Endothelial cell of umbilical vein (primary cell): ENCODE measurements at regions of chr10 and their contacts with region 1.

Region 1: DNA sequence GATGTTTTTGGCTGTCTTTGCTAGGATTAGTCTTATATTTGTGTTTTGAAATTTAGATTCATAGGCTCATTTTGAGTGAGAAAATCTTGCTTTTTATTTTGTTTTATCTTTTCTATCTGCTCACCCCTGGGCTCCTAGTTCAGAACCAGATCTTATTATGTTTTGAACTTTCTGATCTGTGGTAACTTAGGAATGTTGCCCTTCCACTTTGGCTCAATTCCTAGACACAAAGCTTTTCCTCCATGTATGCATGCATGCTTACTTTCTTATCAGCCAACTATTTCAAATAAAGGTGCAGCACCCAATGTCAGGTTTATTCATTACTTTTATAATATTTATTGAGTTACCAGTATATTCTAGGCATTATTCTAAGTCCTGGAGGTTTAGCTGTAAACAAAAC is 374.9 kb upstream of the KIAA1217 start:
- DNase-seq: no peak
- H3K4me3 ChIP-seq: no peak overlapping the region
- H3K27ac ChIP-seq: no peak overlapping the region
- H3K4me1 ChIP-seq: no peaks in the 10 kb centered on the region
- H3K27me3 ChIP-seq: no peaks in the 10 kb centered on the region
- CTCF ChIP-seq: no peak
- POLR2A ChIP-seq: no peak

Region 2: GRCh38 chr10:22534849-22535604 is 1299.0 kb before region 1 on chr10:
- CTCF ChIA-PET with region 1: no interaction called
- POLR2A ChIA-PET with region 1: no interaction called
- dilution Hi-C with region 1: no loop called
- intact Hi-C with region 1: loop called (anchors 10 kb)
- DNase-seq: no peak
- H3K4me3 ChIP-seq: no peak overlapping the region
- H3K27ac ChIP-seq: no peak overlapping the region
- H3K4me1 ChIP-seq: no peaks in the 10 kb centered on the region
- H3K27me3 ChIP-seq: no peaks in the 10 kb centered on the region
- CTCF ChIP-seq: no peak
- POLR2A ChIP-seq: no peak

Region 3: DNA sequence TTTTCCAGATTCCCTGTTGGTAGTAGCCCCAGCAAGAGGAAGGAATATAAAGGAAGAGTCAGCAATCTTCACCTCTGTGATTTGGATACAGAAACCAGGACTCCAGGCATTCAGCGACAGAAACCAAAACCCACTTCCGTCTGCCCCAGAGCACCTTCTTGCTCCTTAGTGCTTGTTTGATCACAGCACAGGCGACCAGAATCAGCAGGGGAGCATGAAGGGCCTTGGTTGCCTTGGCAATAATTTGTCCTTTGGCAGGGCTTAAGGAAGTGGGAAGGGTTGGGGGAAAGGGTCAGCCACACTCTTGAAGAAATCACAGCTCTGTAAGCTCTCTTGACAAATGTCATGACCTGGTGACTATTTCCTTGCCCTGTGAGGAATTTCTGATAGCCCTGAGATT is 15.6 kb before region 1 on chr10:
- CTCF ChIA-PET with region 1: no interaction called
- POLR2A ChIA-PET with region 1: no interaction called
- dilution Hi-C with region 1: no loop called
- intact Hi-C with region 1: no loop called
- DNase-seq: no peak
- H3K4me3 ChIP-seq: no peak overlapping the region
- H3K27ac ChIP-seq: no peak overlapping the region
- H3K4me1 ChIP-seq: no peaks in the 10 kb centered on the region
- H3K27me3 ChIP-seq: no peaks in the 10 kb centered on the region
- CTCF ChIP-seq: no peak
- POLR2A ChIP-seq: no peak

Region 4: GRCh38 chr10:23955456-23956225 is 121.6 kb after region 1 on chr10:
- CTCF ChIA-PET with region 1: no interaction called
- POLR2A ChIA-PET with region 1: no interaction called
- dilution Hi-C with region 1: no loop called
- intact Hi-C with region 1: no loop called
- DNase-seq: no peak
- H3K4me3 ChIP-seq: no peak overlapping the region
- H3K27ac ChIP-seq: no peak overlapping the region
- H3K4me1 ChIP-seq: no peaks in the 10 kb centered on the region
- H3K27me3 ChIP-seq: no peaks in the 10 kb centered on the region
- CTCF ChIP-seq: no peak
- POLR2A ChIP-seq: no peak